Gastrocnemius medialis (tissue), 4 donors: ENCODE measurements at regions of chr1 and their contacts with region 1.

Region 1: GRCh38 chr1:239418681-239419080 is 32.3 kb downstream of the CHRM3 start:
- DNase-seq: no peak
- ATAC-seq: no peak
- H3K4me3 ChIP-seq: no peak overlapping the region
- H3K27ac ChIP-seq: no peak overlapping the region
- H3K4me1 ChIP-seq: no peaks in the 10 kb centered on the region
- H3K27me3 ChIP-seq: no peaks in the 10 kb centered on the region
- CTCF ChIP-seq: no peak
- POLR2A ChIP-seq: no peak

Region 2: DNA sequence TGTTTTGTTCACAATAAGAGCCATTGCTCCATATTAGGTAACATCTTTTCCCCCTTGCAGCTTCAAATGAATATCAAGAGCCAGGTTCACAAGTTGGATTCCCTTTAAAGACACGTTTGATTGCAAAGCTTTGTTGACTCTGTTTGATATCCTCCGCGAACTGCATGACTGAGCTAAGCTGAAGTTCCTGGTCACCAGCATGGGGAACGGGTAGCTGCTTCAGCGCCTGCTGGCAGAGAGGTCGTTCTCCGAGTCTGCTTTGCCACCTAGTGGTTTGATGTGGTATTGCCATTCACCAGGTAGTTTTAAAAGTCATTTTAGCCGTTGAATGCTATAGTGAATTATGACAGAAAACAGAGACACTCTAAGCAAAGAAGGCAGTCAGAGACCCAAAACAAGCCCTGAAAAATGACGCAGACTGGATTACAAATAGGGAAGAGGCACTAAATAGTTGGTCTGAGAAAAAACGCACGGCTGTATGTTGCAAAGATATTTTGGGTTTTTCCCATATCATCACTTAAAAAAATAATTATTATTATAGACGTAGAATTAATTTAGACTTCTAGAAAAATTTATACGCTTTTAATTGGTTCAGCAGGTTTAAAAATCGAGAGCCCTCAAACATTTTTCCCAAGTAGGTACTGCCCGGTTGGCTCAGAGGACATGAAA is 479.5 kb after region 1 on chr1:
- in situ Hi-C with region 1: loop called in 2 of 4 experiments (anchors 25 kb)
- intact Hi-C with region 1: no loop called
- DNase-seq: peak; percentile 19 to 30
- ATAC-seq: peak in 1 of 2 donors; percentile 66
- H3K4me3 ChIP-seq: no peak overlapping the region
- H3K27ac ChIP-seq: no peak overlapping the region
- H3K4me1 ChIP-seq: no peaks in the 10 kb centered on the region
- H3K27me3 ChIP-seq: peaks cover 0 to 5% (median 0%) of the 10 kb centered on the region in 3 donors
- CTCF ChIP-seq: peak; percentile 56 to 91 (median 72)
- POLR2A ChIP-seq: no peak